ENCODE measurements at regions of chr22 and their contacts with region 1.

Region 1: GRCh38 chr22:40177738-40178416 is at the start of gene TNRC6B:
- DNase-seq: peak; percentile 98
- ATAC-seq: peak; percentile 94
- H3K4me3 ChIP-seq: peak within 1 kb of the TSS; percentile 75 to 97 (median 87)
- H3K27ac ChIP-seq: peak within 1 kb of the TSS; percentile 83
- H3K4me1 ChIP-seq: peaks cover 53% of the 10 kb centered on the region
- H3K27me3 ChIP-seq: no peaks in the 10 kb centered on the region; a peak in 1 of 5 replicates
- CTCF ChIP-seq: no peak
- EP300 ChIP-seq: 0 out of 4 replicates have a peak, but pooled peaks of 1 of the 2 experiments have one; percentile 24
- POLR2A ChIP-seq: peak; percentile 93 to 99
- RAD21 ChIP-seq: no peak
- total RNA-seq, gene TNRC6B: 13.2 and 17.2 TPM in 2 replicates

Region 2: DNA sequence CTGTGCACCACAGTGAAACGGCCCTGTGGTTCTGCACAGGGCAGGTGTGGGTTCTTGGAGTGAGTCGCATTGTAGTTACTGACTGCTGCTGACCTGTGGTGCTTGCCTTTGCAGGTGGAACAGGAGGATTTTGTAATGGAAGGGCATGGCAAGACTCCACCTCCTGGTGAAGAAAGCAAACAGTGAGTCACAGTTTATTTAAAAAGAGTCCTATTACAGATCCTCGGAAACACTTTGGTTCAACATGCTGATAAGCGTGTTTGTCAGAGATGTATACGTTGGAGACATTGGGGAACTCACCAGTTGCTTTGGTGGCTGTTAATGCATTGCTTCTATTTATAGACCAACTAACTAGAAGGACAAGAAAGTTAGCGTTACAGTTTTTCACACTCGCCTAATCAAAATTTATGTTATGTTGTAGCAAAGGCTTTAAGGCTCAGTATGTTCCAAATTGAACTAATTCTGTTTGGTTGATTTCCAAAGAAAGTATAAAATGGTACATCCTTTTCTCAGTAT is 21.8 kb before region 1 on chr22:
- CTCF ChIA-PET with region 1: no interaction called
- POLR2A ChIA-PET with region 1: interaction called, 7 read pairs
- in situ Hi-C with region 1: no loop called
- intact Hi-C with region 1: loop called (anchors 2 kb)
- DNase-seq: peak; percentile 93
- ATAC-seq: peak; percentile 99
- H3K4me3 ChIP-seq: no peak overlapping the region
- H3K27ac ChIP-seq: no peak overlapping the region
- H3K4me1 ChIP-seq: peaks cover 18% of the 10 kb centered on the region
- H3K27me3 ChIP-seq: no peaks in the 10 kb centered on the region; a peak in 1 of 5 replicates
- CTCF ChIP-seq: peak; percentile 55
- EP300 ChIP-seq: peak in 1 of 2 experiments; percentile 73; a peak in 2 of 4 replicates
- POLR2A ChIP-seq: no peak
- RAD21 ChIP-seq: no peak

Region 3: GRCh38 chr22:40258451-40259046 is 80.7 kb after region 1 on chr22:
- CTCF ChIA-PET with region 1: no interaction called
- POLR2A ChIA-PET with region 1: no interaction called
- in situ Hi-C with region 1: no loop called
- intact Hi-C with region 1: no loop called
- DNase-seq: no peak
- ATAC-seq: no peak
- H3K4me3 ChIP-seq: no peak overlapping the region
- H3K27ac ChIP-seq: no peak overlapping the region
- H3K4me1 ChIP-seq: peaks cover 9% of the 10 kb centered on the region
- H3K27me3 ChIP-seq: no peaks in the 10 kb centered on the region
- CTCF ChIP-seq: no peak
- EP300 ChIP-seq: no peak
- POLR2A ChIP-seq: no peak
- RAD21 ChIP-seq: no peak

Measured in HepG2 (cell line).